Activated CD8-positive, alpha-beta T cell treated with anti-CD3 and anti-CD28 coated beads, Interleukin-2, amount 10 ng/mL, durations not matched to agents 7 days and 5 days (primary cell): ENCODE measurements at regions of chr2 and their contacts with region 1.

Region 1: GRCh38 chr2:10408649-10409579 is 39.2 kb downstream of the ODC1 start:
- DNase-seq: peak; percentile 87
- ATAC-seq: peak; percentile 85
- H3K4me3 Mint-ChIP-seq: peak overlapping the region; percentile 74
- H3K27ac Mint-ChIP-seq: peak overlapping the region; percentile 91
- H3K4me1 Mint-ChIP-seq: peaks cover 39% of the 10 kb centered on the region
- H3K27me3 Mint-ChIP-seq: no peaks in the 10 kb centered on the region

Region 2: GRCh38 chr2:10122386-10123280 is 286.3 kb before region 1 on chr2 and contains the start of gene RRM2:
- CTCF ChIA-PET with region 1: interaction called, 139 read pairs
- POLR2A ChIA-PET with region 1: interaction called, 12 read pairs
- DNase-seq: peak; percentile 98
- ATAC-seq: peak; percentile 81
- H3K4me3 Mint-ChIP-seq: peak within 1 kb of the TSS; percentile 98
- H3K27ac Mint-ChIP-seq: peak within 1 kb of the TSS; percentile 99
- H3K4me1 Mint-ChIP-seq: peaks cover 55% of the 10 kb centered on the region
- H3K27me3 Mint-ChIP-seq: no peaks in the 10 kb centered on the region
- total RNA-seq, gene RRM2: 571 to 604 TPM

Region 3: DNA sequence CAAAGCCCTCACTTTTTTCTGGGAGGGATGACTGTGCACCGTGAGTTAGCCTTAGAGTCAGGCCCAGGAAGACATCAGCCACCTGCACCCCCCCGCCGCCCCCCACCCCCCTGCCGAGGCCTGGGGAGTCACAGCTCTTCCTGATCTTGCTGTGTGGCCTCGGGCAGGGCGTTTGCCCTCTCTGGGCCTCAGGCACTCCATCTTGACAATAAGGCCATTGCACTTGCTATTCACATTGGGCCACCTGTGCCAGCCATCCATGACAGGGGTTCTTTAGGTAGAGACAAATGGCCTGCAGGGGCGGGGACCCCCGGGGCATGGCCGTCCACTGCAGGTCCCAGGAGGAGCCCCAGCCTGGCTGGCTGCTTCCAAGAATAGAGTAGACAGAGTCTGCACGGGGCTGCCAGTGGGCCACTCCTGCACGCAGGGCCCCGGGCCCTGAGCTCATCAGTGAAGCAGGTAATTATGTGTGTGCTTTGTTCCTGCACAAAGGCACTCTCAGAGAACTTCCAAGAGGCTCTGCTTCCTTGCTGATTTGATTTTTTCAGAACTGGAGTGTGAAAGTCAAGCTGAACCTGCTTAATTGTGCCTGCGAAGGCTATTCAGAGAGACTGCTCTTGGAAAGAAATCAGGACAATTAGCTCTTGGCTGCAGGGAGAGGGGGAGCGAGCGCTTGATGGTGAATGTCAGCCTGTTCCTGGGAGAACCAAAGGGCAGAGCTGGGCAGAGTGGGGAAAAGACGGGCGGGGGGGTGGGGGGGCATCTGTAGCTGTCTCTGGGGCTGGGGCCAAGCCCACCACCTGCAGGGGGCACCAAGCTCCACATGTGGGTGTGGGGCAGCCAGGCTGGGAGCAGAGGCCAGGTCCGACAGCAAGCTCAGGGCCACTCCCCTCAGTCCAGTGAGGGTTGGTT is 246.1 kb before region 1 on chr2:
- CTCF ChIA-PET with region 1: interaction called, 28 read pairs
- POLR2A ChIA-PET with region 1: no interaction called
- DNase-seq: no peak
- ATAC-seq: no peak
- H3K4me3 Mint-ChIP-seq: no peak overlapping the region
- H3K27ac Mint-ChIP-seq: no peak overlapping the region
- H3K4me1 Mint-ChIP-seq: peaks cover 29% of the 10 kb centered on the region
- H3K27me3 Mint-ChIP-seq: no peaks in the 10 kb centered on the region

Region 4: GRCh38 chr2:10285556-10286198 is 123.2 kb before region 1 on chr2:
- CTCF ChIA-PET with region 1: interaction called, 12 read pairs
- POLR2A ChIA-PET with region 1: no interaction called
- DNase-seq: no peak
- ATAC-seq: no peak
- H3K4me3 Mint-ChIP-seq: no peak overlapping the region
- H3K27ac Mint-ChIP-seq: no peak overlapping the region
- H3K4me1 Mint-ChIP-seq: peaks cover 10% of the 10 kb centered on the region
- H3K27me3 Mint-ChIP-seq: no peaks in the 10 kb centered on the region

Region 5: GRCh38 chr2:10331027-10331701 is 77.8 kb before region 1 on chr2:
- CTCF ChIA-PET with region 1: interaction called, 30 read pairs
- POLR2A ChIA-PET with region 1: interaction called, 4 read pairs
- DNase-seq: peak; percentile 84
- ATAC-seq: peak; percentile 74
- H3K4me3 Mint-ChIP-seq: peak overlapping the region; percentile 84
- H3K27ac Mint-ChIP-seq: peak overlapping the region; percentile 85
- H3K4me1 Mint-ChIP-seq: peaks cover 64% of the 10 kb centered on the region
- H3K27me3 Mint-ChIP-seq: no peaks in the 10 kb centered on the region

Region 6: GRCh38 chr2:10434886-10435819 is 26.2 kb after region 1 on chr2:
- CTCF ChIA-PET with region 1: interaction called, 74 read pairs
- POLR2A ChIA-PET with region 1: no interaction called
- DNase-seq: peak; percentile 83
- ATAC-seq: peak; percentile 66
- H3K4me3 Mint-ChIP-seq: no peak overlapping the region
- H3K27ac Mint-ChIP-seq: peak overlapping the region; percentile 8
- H3K4me1 Mint-ChIP-seq: peaks cover 11% of the 10 kb centered on the region
- H3K27me3 Mint-ChIP-seq: peaks cover 15% of the 10 kb centered on the region

Region 7: GRCh38 chr2:10548626-10549025 is 139.7 kb after region 1 on chr2:
- CTCF ChIA-PET with region 1: no interaction called
- POLR2A ChIA-PET with region 1: no interaction called
- DNase-seq: no peak
- ATAC-seq: no peak
- H3K4me3 Mint-ChIP-seq: no peak overlapping the region
- H3K27ac Mint-ChIP-seq: no peak overlapping the region
- H3K4me1 Mint-ChIP-seq: peaks cover 42% of the 10 kb centered on the region
- H3K27me3 Mint-ChIP-seq: peaks cover 37% of the 10 kb centered on the region